Adrenal gland (tissue), 19 donors: ENCODE measurements at regions of chr4 and their contacts with region 1.

Region 1: DNA sequence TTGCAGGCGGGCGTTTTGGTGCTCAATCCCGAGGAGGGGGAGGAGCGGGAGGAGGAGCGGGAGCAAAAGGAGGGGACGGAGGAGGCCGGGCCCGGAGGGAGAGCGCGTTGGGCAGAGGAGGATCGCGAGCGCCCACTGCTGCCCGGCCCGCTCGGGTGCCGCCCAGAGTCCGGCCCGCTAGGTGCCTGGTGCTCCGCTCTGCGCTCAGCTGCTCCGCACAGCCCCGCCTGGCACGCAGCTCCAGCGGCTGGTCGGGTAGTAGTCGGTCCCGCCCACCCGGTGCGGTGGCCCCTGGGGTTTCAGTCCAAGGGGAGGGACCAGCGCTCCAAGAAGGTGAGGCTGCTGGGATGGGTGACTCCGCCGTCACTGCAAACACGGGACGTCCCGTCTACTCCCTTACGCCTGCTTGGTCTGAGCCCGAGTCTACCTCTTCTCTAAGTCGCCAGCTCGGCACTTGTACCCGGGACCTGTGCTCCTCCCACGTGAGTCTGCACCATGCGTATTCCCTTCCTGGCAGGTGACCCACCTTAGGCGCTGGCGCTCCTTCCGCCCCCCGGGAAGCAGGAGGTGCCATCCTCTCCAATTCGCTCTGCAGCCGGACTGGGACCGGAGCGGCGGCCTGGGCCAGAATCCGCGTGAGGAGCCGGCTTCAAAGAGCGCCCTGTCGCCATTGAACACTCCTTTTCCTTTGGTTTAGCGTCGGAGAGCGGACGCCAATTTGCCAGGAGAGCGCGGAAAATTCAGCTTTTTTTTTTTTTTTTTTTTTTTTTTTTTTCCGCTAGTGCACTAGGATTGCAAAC is 405 bp upstream of the HS3ST1 start:
- DNase-seq: peak; percentile 86 to 92 (median 90)
- H3K4me3 ChIP-seq: peak overlapping the region; percentile 59 to 80 (median 66)
- H3K27ac ChIP-seq: peak overlapping the region; percentile 15 to 87 (median 70)
- H3K4me1 ChIP-seq: peaks cover 3 to 21% of the 10 kb centered on the region in 2 donors
- H3K27me3 ChIP-seq: no peaks in the 10 kb centered on the region
- CTCF ChIP-seq: peak; percentile 57 to 88 (median 72)
- POLR2A ChIP-seq: peak in 1 of 2 donors; percentile 66

Region 2: DNA sequence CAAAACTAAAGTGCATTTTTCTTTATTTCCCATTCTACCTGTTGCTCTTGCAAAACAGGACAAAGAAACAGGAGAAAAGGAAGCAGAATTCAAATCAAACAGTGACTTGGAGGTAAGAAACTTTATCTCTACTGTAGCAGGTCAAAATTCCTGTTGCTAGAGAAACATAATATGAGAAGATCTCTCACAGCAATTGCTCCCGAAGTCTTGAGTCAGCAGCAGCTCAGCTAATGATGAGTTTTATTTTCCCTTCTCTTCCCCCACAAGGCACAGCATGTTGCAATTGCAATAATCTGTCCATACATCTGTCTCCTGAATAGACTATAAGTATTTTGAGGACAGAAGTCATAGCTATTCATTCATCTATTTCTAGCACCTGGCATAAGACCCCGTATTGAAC is 857.2 kb before region 1 on chr4:
- intact Hi-C with region 1: loop called in 1 of 2 experiments (anchors 5 kb)
- DNase-seq: no peak
- H3K4me3 ChIP-seq: no peak overlapping the region
- H3K27ac ChIP-seq: no peak overlapping the region
- H3K4me1 ChIP-seq: no peaks in the 10 kb centered on the region
- H3K27me3 ChIP-seq: no peaks in the 10 kb centered on the region
- CTCF ChIP-seq: no peak
- POLR2A ChIP-seq: no peak

Region 3: GRCh38 chr4:10582059-10582686 is 846.9 kb before region 1 on chr4:
- intact Hi-C with region 1: loop called in 1 of 2 experiments (anchors 5 kb)
- DNase-seq: peak; percentile 30 to 84 (median 56)
- H3K4me3 ChIP-seq: no peak overlapping the region
- H3K27ac ChIP-seq: no peak overlapping the region
- H3K4me1 ChIP-seq: no peaks in the 10 kb centered on the region
- H3K27me3 ChIP-seq: no peaks in the 10 kb centered on the region
- CTCF ChIP-seq: peak; percentile 71 to 88 (median 83)
- POLR2A ChIP-seq: no peak

Region 4: GRCh38 chr4:11338956-11339782 is 89.9 kb before region 1 on chr4:
- intact Hi-C with region 1: no loop called
- DNase-seq: no peak
- H3K4me3 ChIP-seq: no peak overlapping the region
- H3K27ac ChIP-seq: no peak overlapping the region
- H3K4me1 ChIP-seq: no peaks in the 10 kb centered on the region
- H3K27me3 ChIP-seq: no peaks in the 10 kb centered on the region
- CTCF ChIP-seq: no peak
- POLR2A ChIP-seq: no peak

Region 5: GRCh38 chr4:11720292-11720691 is 291.2 kb after region 1 on chr4:
- intact Hi-C with region 1: loop called in 1 of 2 experiments (anchors 10 kb)
- DNase-seq: peak in 5 of 7 donors; percentile 29 to 55 (median 33)
- H3K4me3 ChIP-seq: no peak overlapping the region
- H3K27ac ChIP-seq: no peak overlapping the region
- H3K4me1 ChIP-seq: no peaks in the 10 kb centered on the region
- H3K27me3 ChIP-seq: no peaks in the 10 kb centered on the region
- CTCF ChIP-seq: peak; percentile 67 to 86 (median 82)
- POLR2A ChIP-seq: no peak